PC-3 (cell line): ENCODE measurements at regions of chr5 and their contacts with region 1.

Region 1: DNA sequence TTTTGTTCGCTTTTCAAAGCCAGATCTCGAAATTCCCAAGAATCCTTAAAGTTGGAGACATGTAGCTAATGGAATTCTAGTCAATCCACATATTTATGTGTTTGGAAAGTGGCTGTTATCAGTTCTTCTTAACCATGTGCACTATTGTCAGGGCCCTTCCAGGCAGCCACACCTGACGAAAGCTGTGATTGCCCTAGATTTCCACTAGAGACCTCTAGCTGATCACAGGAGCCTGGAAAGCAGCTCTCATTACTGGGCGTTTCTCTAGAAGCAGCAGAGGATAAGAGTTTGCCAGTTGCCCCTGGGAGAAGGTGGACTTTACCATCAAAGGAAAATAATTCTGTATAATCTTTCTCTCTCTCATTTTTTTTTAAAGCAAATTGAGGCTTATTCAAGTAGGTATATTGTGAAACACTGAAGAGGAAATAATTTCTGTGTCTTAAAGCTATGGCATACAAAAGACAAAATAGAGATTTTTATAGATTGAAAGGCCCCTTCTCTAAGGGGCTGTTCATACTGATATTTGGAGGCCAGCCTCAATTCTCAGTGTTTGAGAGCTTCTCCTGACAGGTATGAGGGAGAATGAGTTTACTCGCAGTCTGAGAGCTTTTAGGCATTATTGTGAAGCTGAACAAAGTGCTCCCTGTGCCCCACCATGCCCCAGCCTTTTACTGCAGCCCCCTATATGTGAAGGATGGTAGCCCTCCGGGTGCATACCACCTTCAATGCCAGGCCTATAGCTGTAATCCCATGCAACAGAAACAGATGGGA is 405.4 kb upstream of the ACTBL2 start:
- DNase-seq: peak; percentile 69
- ATAC-seq: peak; percentile 89
- H3K4me3 ChIP-seq: no peak overlapping the region
- H3K27ac ChIP-seq: no peak overlapping the region
- H3K4me1 ChIP-seq: peaks cover 29% of the 10 kb centered on the region
- H3K27me3 ChIP-seq: no peaks in the 10 kb centered on the region
- CTCF ChIP-seq: peak; percentile 73

Region 2: DNA sequence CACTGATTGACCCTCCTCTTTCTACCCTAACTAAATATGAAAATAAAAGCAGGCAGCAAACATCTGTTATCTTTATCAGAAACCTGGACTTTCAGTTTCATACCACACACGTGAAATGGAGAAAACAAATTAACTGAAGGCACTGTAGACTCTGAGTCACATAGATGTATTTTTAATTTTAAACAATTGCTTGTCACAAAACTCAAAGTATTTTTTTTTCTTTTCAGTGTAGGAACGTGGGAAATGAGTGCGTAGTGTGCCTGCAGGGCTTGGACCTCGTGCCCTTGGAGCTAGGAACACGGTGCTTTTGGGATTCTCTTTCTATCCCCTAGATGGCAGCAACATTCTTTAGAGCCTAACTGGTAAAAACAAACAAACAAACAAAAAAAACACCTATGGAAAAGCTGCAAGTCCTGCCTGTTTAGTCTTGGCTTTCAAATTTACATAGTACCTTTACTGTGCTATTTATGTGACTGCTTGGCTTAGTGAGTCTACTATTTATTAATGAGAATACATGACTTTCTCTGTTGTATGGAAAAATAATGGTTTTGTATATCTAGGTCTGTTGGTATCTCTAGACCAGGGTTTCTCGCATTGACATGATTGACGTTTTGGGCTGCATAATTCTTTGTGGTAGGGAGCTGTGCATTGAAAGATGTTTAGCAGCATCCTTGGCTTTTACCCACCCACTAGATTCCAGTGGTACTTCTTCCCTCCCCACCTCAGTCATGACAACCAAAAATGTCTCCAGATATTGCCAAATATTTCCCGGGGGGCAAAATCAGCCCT is 388.6 kb before region 1 on chr5:
- CTCF ChIA-PET with region 1: interaction called, 6 read pairs
- POLR2A ChIA-PET with region 1: no interaction called
- intact Hi-C with region 1: loop called (anchors 1 kb)
- DNase-seq: peak; percentile 71
- ATAC-seq: peak; percentile 41; the same call in 1 of the 2 replicates
- H3K4me3 ChIP-seq: peak overlapping the region; percentile 19; the same call in 1 of the 2 replicates
- H3K27ac ChIP-seq: no peak overlapping the region
- H3K4me1 ChIP-seq: peaks cover 35% of the 10 kb centered on the region
- H3K27me3 ChIP-seq: no peaks in the 10 kb centered on the region
- CTCF ChIP-seq: peak; percentile 77

Region 3: DNA sequence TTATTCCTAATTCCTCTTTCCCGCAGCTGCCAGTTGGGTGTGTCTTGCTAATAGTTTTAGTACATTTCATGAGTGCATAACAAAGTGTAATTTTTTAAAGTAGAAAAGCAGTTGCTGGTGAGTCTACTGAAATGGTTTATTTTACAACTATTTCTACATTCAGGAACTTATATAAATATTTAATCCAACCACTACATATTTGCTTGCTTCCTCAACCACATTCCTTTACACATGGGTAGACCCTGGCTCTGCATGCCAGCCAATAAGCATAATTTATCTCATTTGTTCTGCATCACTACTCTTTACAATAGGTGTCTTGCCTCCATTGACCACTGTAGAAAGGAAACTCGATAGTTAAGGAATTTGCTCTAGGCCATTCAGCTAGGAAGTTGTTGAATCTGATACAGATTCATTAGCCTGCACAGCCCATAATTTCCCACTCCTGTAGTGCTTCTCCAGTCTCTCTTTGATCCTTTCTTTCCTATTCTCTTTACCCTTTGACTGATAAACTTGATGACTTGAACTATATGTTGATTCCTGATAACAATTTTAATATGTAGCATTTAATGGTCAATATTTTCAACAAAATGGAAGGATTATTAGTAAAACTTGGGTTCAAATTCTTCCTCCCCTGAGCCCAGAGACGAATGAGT is 62.9 kb before region 1 on chr5:
- CTCF ChIA-PET with region 1: no interaction called
- POLR2A ChIA-PET with region 1: no interaction called
- intact Hi-C with region 1: loop called (anchors 10 kb)
- DNase-seq: peak; percentile 93
- ATAC-seq: peak; percentile 85
- H3K4me3 ChIP-seq: no peak overlapping the region
- H3K27ac ChIP-seq: peak overlapping the region; percentile 93
- H3K4me1 ChIP-seq: peaks cover 36% of the 10 kb centered on the region
- H3K27me3 ChIP-seq: no peaks in the 10 kb centered on the region
- CTCF ChIP-seq: no peak

Region 4: GRCh38 chr5:58071566-58071965 is 183.5 kb after region 1 on chr5:
- CTCF ChIA-PET with region 1: no interaction called
- POLR2A ChIA-PET with region 1: no interaction called
- intact Hi-C with region 1: loop called (anchors 5 kb)
- DNase-seq: no peak
- ATAC-seq: no peak
- H3K4me3 ChIP-seq: no peak overlapping the region
- H3K27ac ChIP-seq: no peak overlapping the region
- H3K4me1 ChIP-seq: peaks cover 33% of the 10 kb centered on the region
- H3K27me3 ChIP-seq: no peaks in the 10 kb centered on the region
- CTCF ChIP-seq: no peak

Region 5: DNA sequence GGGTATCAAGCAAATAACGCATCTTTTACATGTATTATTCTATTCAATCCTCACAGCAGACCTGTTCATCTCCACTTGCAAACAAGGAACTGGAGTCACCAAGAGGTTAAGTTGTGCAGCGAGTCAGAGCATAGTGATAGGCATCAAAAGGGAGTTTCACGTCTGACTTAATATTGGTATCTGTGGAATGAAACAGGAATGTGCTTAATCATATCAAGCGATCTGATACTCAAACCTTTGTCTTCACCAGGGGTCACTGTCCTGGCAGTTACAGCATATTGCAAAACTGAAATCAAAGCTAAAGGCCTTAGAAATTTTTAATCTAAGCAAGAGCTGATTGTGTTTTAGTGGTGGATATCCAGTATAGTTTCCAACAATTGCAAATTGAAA is 300.2 kb after region 1 on chr5:
- CTCF ChIA-PET with region 1: no interaction called
- POLR2A ChIA-PET with region 1: no interaction called
- intact Hi-C with region 1: loop called (anchors 2 kb)
- DNase-seq: peak; percentile 84
- ATAC-seq: peak; percentile 63
- H3K4me3 ChIP-seq: 0 out of 2 replicates have a peak overlapping the region, but pooled peaks have one; percentile 0
- H3K27ac ChIP-seq: peak overlapping the region; percentile 64
- H3K4me1 ChIP-seq: peaks cover 84% of the 10 kb centered on the region
- H3K27me3 ChIP-seq: no peaks in the 10 kb centered on the region
- CTCF ChIP-seq: peak; percentile 26; the same call in 1 of the 2 replicates